Activated CD8-positive, alpha-beta T cell treated with anti-CD3 and anti-CD28 coated beads for 36 hours (primary cell): ENCODE measurements at regions of chr10 and their contacts with region 1.

Region 1: DNA sequence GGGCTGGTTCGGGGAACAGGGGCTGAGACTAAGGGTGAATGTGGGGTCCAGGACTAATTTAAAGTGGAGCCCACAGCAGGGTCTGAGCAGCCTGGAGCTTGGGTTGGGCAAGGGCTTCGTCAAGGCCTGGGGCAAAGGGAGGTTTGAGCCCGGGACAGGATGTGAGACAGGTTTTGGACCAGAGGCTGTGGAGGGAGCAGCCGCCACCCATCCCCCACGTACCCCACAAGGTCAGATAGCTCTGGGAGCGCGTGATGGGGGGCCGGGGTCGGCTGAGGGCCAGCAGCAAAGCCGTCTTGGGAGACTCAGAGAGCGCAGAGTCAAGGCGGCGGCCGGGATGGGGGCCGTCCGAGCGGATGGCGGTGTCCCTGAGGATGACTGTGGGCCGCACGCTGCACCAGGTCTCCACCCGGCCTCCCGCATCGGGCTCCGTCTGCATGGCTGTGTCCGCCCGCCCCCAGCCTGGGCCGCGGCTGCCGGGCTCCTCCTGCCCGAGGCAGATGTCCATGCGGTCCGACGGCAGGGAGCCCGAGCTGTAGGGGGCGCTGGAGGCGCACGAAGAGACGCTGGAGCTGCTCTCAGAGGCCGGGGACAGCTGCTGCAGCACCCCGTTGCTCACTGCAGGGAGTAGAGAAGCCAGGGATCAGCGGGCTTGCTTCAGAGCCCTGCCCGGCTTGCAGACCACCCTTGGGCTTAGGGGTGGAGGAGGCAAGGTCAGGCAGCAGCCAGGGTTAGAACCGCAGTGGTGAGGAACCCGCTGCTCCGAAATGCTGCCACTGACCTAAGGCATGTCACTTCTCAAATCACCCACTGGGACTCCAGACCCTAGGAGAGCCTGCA is 12.1 kb downstream of the PDZD7 start:
- DNase-seq: peak; percentile 93
- ATAC-seq: peak; percentile 87
- H3K4me3 Mint-ChIP-seq: no peak overlapping the region
- H3K27ac Mint-ChIP-seq: no peak overlapping the region
- H3K4me1 Mint-ChIP-seq: peaks cover 20% of the 10 kb centered on the region
- H3K27me3 Mint-ChIP-seq: peaks cover 42% of the 10 kb centered on the region
- CTCF ChIP-seq: peak; percentile 91

Region 2: GRCh38 chr10:100998991-100999741 is 19.7 kb before region 1 on chr10:
- CTCF ChIA-PET with region 1: interaction called, 178 read pairs
- POLR2A ChIA-PET with region 1: interaction called, 4 read pairs
- intact Hi-C with region 1: no loop called
- DNase-seq: peak; percentile 78
- ATAC-seq: peak; percentile 64
- H3K4me3 Mint-ChIP-seq: peak overlapping the region; percentile 78
- H3K27ac Mint-ChIP-seq: peak overlapping the region; percentile 88
- H3K4me1 Mint-ChIP-seq: peaks cover 20% of the 10 kb centered on the region
- H3K27me3 Mint-ChIP-seq: no peaks in the 10 kb centered on the region
- CTCF ChIP-seq: peak; percentile 99

Region 3: DNA sequence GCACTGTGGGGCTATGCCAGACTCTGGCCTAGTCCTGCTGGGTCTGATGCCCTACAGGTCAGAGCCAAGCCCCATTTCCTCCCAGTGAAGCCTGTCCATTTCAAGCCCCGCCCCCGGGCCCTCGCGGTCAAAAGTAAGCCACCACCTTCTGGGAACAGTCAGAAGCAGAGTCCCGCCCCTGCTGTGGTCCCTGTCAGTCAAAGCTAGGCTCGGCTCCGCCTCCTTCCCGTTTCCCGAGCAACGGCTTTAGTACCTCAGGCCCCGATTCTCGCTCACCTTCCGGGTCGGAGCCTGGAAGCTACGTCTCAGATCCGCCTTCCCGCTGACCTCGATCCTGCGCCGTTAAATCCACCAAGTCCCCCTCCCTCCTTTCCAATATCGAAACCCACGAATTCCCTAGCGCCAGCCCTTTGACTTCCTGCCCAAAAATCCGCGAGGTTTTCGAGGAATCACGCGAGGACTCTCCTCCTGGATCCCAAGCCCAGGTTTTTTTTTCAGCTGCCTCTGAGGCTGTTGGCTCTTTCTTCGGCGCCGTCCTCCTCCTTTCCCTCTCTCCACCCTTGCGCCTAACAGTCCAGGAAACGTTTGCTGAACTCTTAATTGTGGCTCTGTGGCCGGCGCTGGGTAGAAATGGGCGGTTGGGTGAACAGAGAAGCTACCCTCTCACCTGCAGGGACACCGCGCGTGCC is 24.0 kb after region 1 on chr10:
- CTCF ChIA-PET with region 1: interaction called, 114 read pairs
- POLR2A ChIA-PET with region 1: interaction called, 4 read pairs
- intact Hi-C with region 1: no loop called
- DNase-seq: peak; percentile 98
- ATAC-seq: peak; percentile 96
- H3K4me3 Mint-ChIP-seq: peak overlapping the region; percentile 80
- H3K27ac Mint-ChIP-seq: peak overlapping the region; percentile 81
- H3K4me1 Mint-ChIP-seq: peaks cover 21% of the 10 kb centered on the region
- H3K27me3 Mint-ChIP-seq: peaks cover 17% of the 10 kb centered on the region
- CTCF ChIP-seq: no peak

Region 4: GRCh38 chr10:101060036-101060950 is 41.5 kb after region 1 on chr10:
- CTCF ChIA-PET with region 1: interaction called, 43 read pairs
- POLR2A ChIA-PET with region 1: no interaction called
- intact Hi-C with region 1: loop called (anchors 2 kb)
- DNase-seq: peak; percentile 96
- ATAC-seq: peak; percentile 66
- H3K4me3 Mint-ChIP-seq: peak overlapping the region; percentile 82
- H3K27ac Mint-ChIP-seq: peak overlapping the region; percentile 96
- H3K4me1 Mint-ChIP-seq: peaks cover 18% of the 10 kb centered on the region
- H3K27me3 Mint-ChIP-seq: peaks cover 19% of the 10 kb centered on the region
- CTCF ChIP-seq: peak; percentile 97

Region 5: DNA sequence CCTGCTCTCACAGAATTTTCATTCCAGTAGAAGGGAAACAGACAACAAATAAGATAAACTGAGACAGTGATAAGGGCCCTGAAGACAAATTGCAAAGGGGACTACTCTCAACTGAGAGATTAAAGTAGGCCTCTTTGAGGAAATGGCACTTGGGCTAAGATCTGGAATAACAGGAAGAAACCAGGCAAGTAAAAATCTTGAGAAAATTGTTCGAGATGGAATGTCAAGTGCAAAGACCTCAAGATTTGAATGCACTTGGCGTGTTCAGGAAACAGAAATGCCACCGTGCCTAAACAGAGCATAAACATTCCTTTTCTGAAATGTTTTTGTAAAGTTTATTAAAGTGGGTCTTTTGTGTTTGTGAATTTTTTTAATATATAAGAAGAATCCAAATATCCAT is 1026.5 kb after region 1 on chr10:
- CTCF ChIA-PET with region 1: no interaction called
- POLR2A ChIA-PET with region 1: no interaction called
- intact Hi-C with region 1: no loop called
- DNase-seq: no peak
- ATAC-seq: no peak
- H3K4me3 Mint-ChIP-seq: no peak overlapping the region
- H3K27ac Mint-ChIP-seq: peak overlapping the region; percentile 39
- H3K4me1 Mint-ChIP-seq: peaks cover 26% of the 10 kb centered on the region
- H3K27me3 Mint-ChIP-seq: no peaks in the 10 kb centered on the region
- CTCF ChIP-seq: no peak